ENCODE measurements at regions of chr5 and their contacts with region 1.

Region 1: GRCh38 chr5:133051580-133052332 is at the start of gene HSPA4:
- DNase-seq: peak; percentile 100
- ATAC-seq: peak; percentile 87
- H3K4me3 ChIP-seq: peak within 1 kb of the TSS; percentile 89 to 93 (median 91)
- H3K4me3 Mint-ChIP-seq: peak within 1 kb of the TSS; percentile 97
- H3K27ac ChIP-seq: peak within 1 kb of the TSS; percentile 89 to 99
- H3K27ac Mint-ChIP-seq: peak within 1 kb of the TSS; percentile 100
- H3K4me1 ChIP-seq: peaks cover 37% of the 10 kb centered on the region in 2 donors
- H3K4me1 Mint-ChIP-seq: peaks cover 67% of the 10 kb centered on the region
- H3K27me3 ChIP-seq: no peaks in the 10 kb centered on the region
- H3K27me3 Mint-ChIP-seq: no peaks in the 10 kb centered on the region
- CTCF ChIP-seq: no peak
- total RNA-seq, gene HSPA4: 95.0 TPM in 2 replicates

Region 2: GRCh38 chr5:132556763-132557477 is 494.8 kb before region 1 on chr5 and contains the start of gene RAD50:
- CTCF ChIA-PET with region 1: no interaction called
- POLR2A ChIA-PET with region 1: no interaction called
- intact Hi-C with region 1: loop called (anchors 5 kb)
- DNase-seq: peak; percentile 91
- ATAC-seq: peak; percentile 94
- H3K4me3 ChIP-seq: peak within 1 kb of the TSS; percentile 62 to 88 (median 81)
- H3K4me3 Mint-ChIP-seq: peak within 1 kb of the TSS; percentile 96
- H3K27ac ChIP-seq: peak within 1 kb of the TSS; percentile 72 to 88
- H3K27ac Mint-ChIP-seq: peak within 1 kb of the TSS; percentile 97
- H3K4me1 ChIP-seq: peaks cover 8 to 21% of the 10 kb centered on the region in 2 donors
- H3K4me1 Mint-ChIP-seq: peaks cover 26% of the 10 kb centered on the region
- H3K27me3 ChIP-seq: no peaks in the 10 kb centered on the region
- H3K27me3 Mint-ChIP-seq: no peaks in the 10 kb centered on the region
- CTCF ChIP-seq: no peak
- total RNA-seq, gene RAD50: 31.7 and 32.7 TPM in 2 replicates

Region 3: GRCh38 chr5:132963175-132964104 is 88.3 kb before region 1 on chr5 and contains the start of gene AFF4:
- CTCF ChIA-PET with region 1: interaction called, 6 read pairs
- POLR2A ChIA-PET with region 1: interaction called, 49 read pairs
- intact Hi-C with region 1: loop called (anchors 1 kb)
- DNase-seq: peak; percentile 96
- ATAC-seq: peak; percentile 84
- H3K4me3 ChIP-seq: peak within 1 kb of the TSS; percentile 63 to 95 (median 83)
- H3K4me3 Mint-ChIP-seq: peak within 1 kb of the TSS; percentile 97
- H3K27ac ChIP-seq: peak within 1 kb of the TSS; percentile 92 to 97
- H3K27ac Mint-ChIP-seq: peak within 1 kb of the TSS; percentile 94
- H3K4me1 ChIP-seq: peaks cover 17 to 26% of the 10 kb centered on the region in 2 donors
- H3K4me1 Mint-ChIP-seq: peaks cover 29% of the 10 kb centered on the region
- H3K27me3 ChIP-seq: no peaks in the 10 kb centered on the region
- H3K27me3 Mint-ChIP-seq: no peaks in the 10 kb centered on the region
- CTCF ChIP-seq: no peak
- total RNA-seq, gene AFF4: 81.5 and 87.4 TPM in 2 replicates

Region 4: GRCh38 chr5:133015466-133015865 is 36.3 kb before region 1 on chr5:
- CTCF ChIA-PET with region 1: no interaction called
- POLR2A ChIA-PET with region 1: no interaction called
- intact Hi-C with region 1: loop called (anchors 5 kb)
- DNase-seq: no peak
- ATAC-seq: no peak
- H3K4me3 ChIP-seq: no peak overlapping the region
- H3K4me3 Mint-ChIP-seq: no peak overlapping the region
- H3K27ac ChIP-seq: no peak overlapping the region
- H3K27ac Mint-ChIP-seq: no peak overlapping the region
- H3K4me1 ChIP-seq: no peaks in the 10 kb centered on the region
- H3K4me1 Mint-ChIP-seq: peaks cover 7% of the 10 kb centered on the region
- H3K27me3 ChIP-seq: no peaks in the 10 kb centered on the region
- H3K27me3 Mint-ChIP-seq: no peaks in the 10 kb centered on the region
- CTCF ChIP-seq: no peak

Region 5: GRCh38 chr5:133032852-133033742 is 18.7 kb before region 1 on chr5:
- CTCF ChIA-PET with region 1: interaction called, 13 read pairs
- POLR2A ChIA-PET with region 1: interaction called, 83 read pairs
- intact Hi-C with region 1: loop called (anchors 1 kb)
- DNase-seq: peak; percentile 79
- ATAC-seq: peak; percentile 92
- H3K4me3 ChIP-seq: peak overlapping the region in 3 of 5 experiments; percentile 1 to 36 (median 2)
- H3K4me3 Mint-ChIP-seq: peak overlapping the region; percentile 81
- H3K27ac ChIP-seq: peak overlapping the region; percentile 90 to 94
- H3K27ac Mint-ChIP-seq: peak overlapping the region; percentile 97
- H3K4me1 ChIP-seq: peaks cover 57 to 69% of the 10 kb centered on the region in 2 donors
- H3K4me1 Mint-ChIP-seq: peaks cover 52% of the 10 kb centered on the region
- H3K27me3 ChIP-seq: no peaks in the 10 kb centered on the region
- H3K27me3 Mint-ChIP-seq: no peaks in the 10 kb centered on the region
- CTCF ChIP-seq: no peak